CD4-positive, alpha-beta T cell (primary cell): ENCODE measurements at regions of chr2 and their contacts with region 1.

Region 1: GRCh38 chr2:98479959-98480524 is 35.4 kb downstream of the INPP4A start:
- DNase-seq: peak in 9 of 14 experiments; percentile 36 to 63 (median 47)
- ATAC-seq: peak; percentile 68
- H3K4me3 ChIP-seq: no peak overlapping the region
- H3K4me3 Mint-ChIP-seq: peak overlapping the region; percentile 62
- H3K27ac ChIP-seq: peak overlapping the region; percentile 58 to 69
- H3K27ac Mint-ChIP-seq: peak overlapping the region; percentile 72
- H3K4me1 ChIP-seq: peaks cover 97% of the 10 kb centered on the region
- H3K4me1 Mint-ChIP-seq: peaks cover 100% of the 10 kb centered on the region
- H3K27me3 ChIP-seq: no peaks in the 10 kb centered on the region
- H3K27me3 Mint-ChIP-seq: no peaks in the 10 kb centered on the region
- CTCF ChIP-seq: no peak

Region 2: GRCh38 chr2:97935719-97936161 is 544.3 kb before region 1 on chr2:
- CTCF ChIA-PET with region 1: no interaction called
- POLR2A ChIA-PET with region 1: no interaction called
- intact Hi-C with region 1: no loop called
- DNase-seq: no peak
- ATAC-seq: no peak
- H3K4me3 ChIP-seq: no peak overlapping the region
- H3K4me3 Mint-ChIP-seq: no peak overlapping the region
- H3K27ac ChIP-seq: no peak overlapping the region
- H3K27ac Mint-ChIP-seq: no peak overlapping the region
- H3K4me1 ChIP-seq: peaks cover 11% of the 10 kb centered on the region
- H3K4me1 Mint-ChIP-seq: peaks cover 87% of the 10 kb centered on the region
- H3K27me3 ChIP-seq: no peaks in the 10 kb centered on the region
- H3K27me3 Mint-ChIP-seq: no peaks in the 10 kb centered on the region
- CTCF ChIP-seq: no peak

Region 3: DNA sequence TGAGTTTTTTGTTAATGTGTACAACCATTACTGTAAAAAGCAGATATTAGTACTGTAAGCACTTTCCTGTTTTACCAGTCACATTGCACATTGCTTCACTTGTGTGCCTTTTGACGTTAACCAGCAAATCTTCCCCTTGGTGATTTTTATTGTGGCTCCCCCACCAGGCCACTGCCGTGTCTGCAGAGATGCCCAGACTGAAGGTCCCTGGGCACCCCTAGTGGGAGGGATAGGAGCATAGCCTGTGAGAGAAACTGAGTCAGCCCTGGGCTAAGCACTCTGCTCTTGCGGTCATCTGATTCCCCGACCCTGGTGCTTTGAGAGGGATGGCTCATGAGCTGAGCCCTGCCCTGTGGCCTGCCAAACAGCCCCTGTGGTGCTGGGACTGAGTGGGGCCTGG is 38.0 kb after region 1 on chr2:
- CTCF ChIA-PET with region 1: no interaction called
- POLR2A ChIA-PET with region 1: no interaction called
- intact Hi-C with region 1: loop called in 1 of 2 experiments (anchors 5 kb)
- DNase-seq: peak; percentile 36 to 81 (median 58)
- ATAC-seq: peak; percentile 94
- H3K4me3 ChIP-seq: no peak overlapping the region
- H3K4me3 Mint-ChIP-seq: no peak overlapping the region
- H3K27ac ChIP-seq: no peak overlapping the region
- H3K27ac Mint-ChIP-seq: peak overlapping the region; percentile 61
- H3K4me1 ChIP-seq: peaks cover 46% of the 10 kb centered on the region
- H3K4me1 Mint-ChIP-seq: peaks cover 63% of the 10 kb centered on the region
- H3K27me3 ChIP-seq: no peaks in the 10 kb centered on the region
- H3K27me3 Mint-ChIP-seq: no peaks in the 10 kb centered on the region
- CTCF ChIP-seq: peak; percentile 87